GM12878 (cell line): ENCODE measurements at regions of chr19 and their contacts with region 1.

Region 1: GRCh38 chr19:40640744-40641143 is 39.6 kb downstream of the LTBP4 start:
- DNase-seq: no peak
- ATAC-seq: no peak
- H3K4me3 ChIP-seq: no peak overlapping the region
- H3K27ac ChIP-seq: no peak overlapping the region
- H3K4me1 ChIP-seq: peaks cover 5% of the 10 kb centered on the region; the same call in 1 of the 2 replicates
- H3K27me3 ChIP-seq: no peaks in the 10 kb centered on the region
- CTCF ChIP-seq: no peak
- EP300 ChIP-seq: no peak
- POLR2A ChIP-seq: no peak
- RAD21 ChIP-seq: no peak

Region 2: GRCh38 chr19:40139533-40140287 is 501.0 kb before region 1 on chr19:
- CTCF ChIA-PET with region 1: interaction called, 15 read pairs
- POLR2A ChIA-PET with region 1: no interaction called
- RAD21 ChIA-PET with region 1: no interaction called
- SMC1A ChIA-PET with region 1: no interaction called
- in situ Hi-C with region 1: no loop called
- intact Hi-C with region 1: no loop called
- DNase-seq: no peak
- ATAC-seq: peak; percentile 44
- H3K4me3 ChIP-seq: no peak overlapping the region
- H3K27ac ChIP-seq: no peak overlapping the region
- H3K4me1 ChIP-seq: peaks cover 18% of the 10 kb centered on the region
- H3K27me3 ChIP-seq: no peaks in the 10 kb centered on the region
- CTCF ChIP-seq: peak; percentile 56 to 87 (median 74)
- EP300 ChIP-seq: no peak
- POLR2A ChIP-seq: no peak
- RAD21 ChIP-seq: peak; percentile 99

Region 3: DNA sequence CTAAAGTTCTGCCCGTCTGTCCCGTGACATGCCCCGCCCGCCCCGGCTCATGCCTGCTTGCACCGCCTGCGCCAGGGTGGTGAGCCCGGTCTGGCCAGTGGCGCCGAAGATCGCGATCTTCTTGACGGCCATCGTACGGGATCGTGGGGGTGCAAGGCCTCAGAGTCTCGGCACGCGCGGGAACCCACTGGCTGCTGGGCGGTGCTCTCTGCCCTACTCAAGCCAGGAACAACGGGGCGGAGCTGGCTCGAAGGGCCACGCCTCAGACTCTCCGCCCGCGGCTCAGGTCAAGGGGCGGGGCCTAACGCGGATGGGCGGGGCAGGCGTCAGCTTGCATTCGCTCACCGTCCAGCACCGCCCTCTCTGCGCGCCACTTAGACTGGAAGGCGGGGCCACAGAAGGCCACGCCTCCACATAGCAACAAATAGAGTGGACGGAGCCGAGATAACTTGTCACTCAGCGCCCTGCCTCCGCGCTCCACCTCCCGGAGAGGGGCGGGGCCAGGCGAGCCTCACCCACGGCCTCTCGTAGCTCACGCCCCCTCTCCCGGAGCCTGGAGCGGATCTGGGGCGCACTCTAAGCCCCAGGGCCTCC is 175.1 kb before region 1 on chr19 and contains the start of gene BLVRB:
- CTCF ChIA-PET with region 1: interaction called, 40 read pairs
- POLR2A ChIA-PET with region 1: no interaction called
- RAD21 ChIA-PET with region 1: interaction called, 12 read pairs
- SMC1A ChIA-PET with region 1: interaction called, 5 read pairs
- in situ Hi-C with region 1: no loop called
- intact Hi-C with region 1: no loop called
- DNase-seq: peak; percentile 96
- ATAC-seq: peak; percentile 89
- H3K4me3 ChIP-seq: peak within 1 kb of the TSS; percentile 66
- H3K27ac ChIP-seq: peak within 1 kb of the TSS; percentile 61
- H3K4me1 ChIP-seq: peaks cover 31% of the 10 kb centered on the region
- H3K27me3 ChIP-seq: peaks cover 0 to 2% of the 10 kb centered on the region in 2 experiments; a peak in 3 of 4 replicates
- CTCF ChIP-seq: no peak
- EP300 ChIP-seq: no peak
- POLR2A ChIP-seq: peak; percentile 87
- RAD21 ChIP-seq: no peak
- polyA plus RNA-seq, gene BLVRB: 6.3 to 16.3 TPM

Region 4: GRCh38 chr19:40542202-40542859 is 98.4 kb before region 1 on chr19:
- CTCF ChIA-PET with region 1: interaction called, 28 read pairs
- POLR2A ChIA-PET with region 1: no interaction called
- RAD21 ChIA-PET with region 1: no interaction called
- SMC1A ChIA-PET with region 1: interaction called, 3 read pairs
- in situ Hi-C with region 1: no loop called
- intact Hi-C with region 1: no loop called
- DNase-seq: no peak
- ATAC-seq: no peak
- H3K4me3 ChIP-seq: no peak overlapping the region
- H3K27ac ChIP-seq: no peak overlapping the region
- H3K4me1 ChIP-seq: no peaks in the 10 kb centered on the region
- H3K27me3 ChIP-seq: peaks cover 0 to 2% of the 10 kb centered on the region in 2 experiments; a peak in 1 of 4 replicates
- CTCF ChIP-seq: no peak
- EP300 ChIP-seq: no peak
- POLR2A ChIP-seq: no peak
- RAD21 ChIP-seq: no peak

Region 5: GRCh38 chr19:40570313-40571004 is 70.3 kb before region 1 on chr19:
- CTCF ChIA-PET with region 1: interaction called, 14 read pairs
- POLR2A ChIA-PET with region 1: no interaction called
- RAD21 ChIA-PET with region 1: no interaction called
- SMC1A ChIA-PET with region 1: no interaction called
- in situ Hi-C with region 1: no loop called
- intact Hi-C with region 1: no loop called
- DNase-seq: peak; percentile 97
- ATAC-seq: peak; percentile 99
- H3K4me3 ChIP-seq: no peak overlapping the region; the same call in 1 of the 2 replicates
- H3K27ac ChIP-seq: no peak overlapping the region
- H3K4me1 ChIP-seq: peaks cover 4% of the 10 kb centered on the region
- H3K27me3 ChIP-seq: peaks cover 4 to 11% of the 10 kb centered on the region in 2 experiments; a peak in 3 of 4 replicates
- CTCF ChIP-seq: peak; percentile 43 to 52 (median 47); a peak in 5 of 6 replicates
- EP300 ChIP-seq: no peak
- POLR2A ChIP-seq: peak; percentile 47; the same call in 1 of the 2 replicates
- RAD21 ChIP-seq: peak; percentile 35; the same call in 1 of the 2 replicates

Region 6: DNA sequence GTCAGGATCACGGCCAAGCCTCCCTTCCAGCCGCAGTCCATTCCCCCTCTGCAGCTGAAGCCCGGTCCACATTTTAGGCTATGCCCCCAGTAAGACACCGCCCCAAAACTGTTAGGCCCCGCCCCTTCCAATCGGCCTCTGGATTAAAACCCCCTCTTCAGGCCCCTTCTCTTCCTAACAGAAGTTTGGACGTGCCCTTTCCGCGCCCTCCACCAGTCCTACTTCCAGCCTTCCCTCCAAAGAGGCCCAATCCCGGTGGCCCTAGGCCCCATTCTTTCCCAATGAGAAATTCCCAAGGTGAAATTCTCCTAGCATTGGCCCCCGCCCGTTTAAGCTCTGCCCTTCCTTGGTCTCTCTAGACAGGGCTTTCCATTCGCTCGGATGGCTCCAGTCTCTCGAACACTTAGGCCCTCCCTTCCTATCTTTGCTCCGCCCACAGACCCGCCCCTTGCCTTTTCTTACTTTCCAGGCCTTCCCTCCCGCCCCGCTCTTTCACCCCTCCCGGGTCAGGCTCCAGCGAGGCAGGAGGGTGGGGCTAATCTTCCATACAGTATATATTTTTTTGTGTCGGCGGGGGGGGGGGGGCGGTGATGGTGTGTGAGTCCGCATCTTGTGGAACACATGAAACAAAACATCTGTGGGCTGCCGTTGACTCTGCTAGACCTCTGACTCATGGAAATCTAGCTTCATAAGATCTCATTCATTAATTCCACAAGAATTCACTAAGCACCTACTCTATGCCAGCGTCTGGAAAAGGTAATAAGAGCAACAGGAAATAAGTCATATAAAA is 25.9 kb before region 1 on chr19:
- CTCF ChIA-PET with region 1: interaction called, 30 read pairs
- POLR2A ChIA-PET with region 1: interaction called, 3 read pairs
- RAD21 ChIA-PET with region 1: no interaction called
- SMC1A ChIA-PET with region 1: interaction called, 5 read pairs
- in situ Hi-C with region 1: no loop called
- intact Hi-C with region 1: no loop called
- DNase-seq: peak; percentile 35
- ATAC-seq: peak; percentile 49
- H3K4me3 ChIP-seq: peak overlapping the region; percentile 98
- H3K27ac ChIP-seq: peak overlapping the region; percentile 38; the same call in 1 of the 2 replicates
- H3K4me1 ChIP-seq: peaks cover 10% of the 10 kb centered on the region; the same call in 1 of the 2 replicates
- H3K27me3 ChIP-seq: no peaks in the 10 kb centered on the region; a peak in 1 of 4 replicates
- CTCF ChIP-seq: no peak
- EP300 ChIP-seq: no peak
- POLR2A ChIP-seq: no peak
- RAD21 ChIP-seq: no peak

Region 7: DNA sequence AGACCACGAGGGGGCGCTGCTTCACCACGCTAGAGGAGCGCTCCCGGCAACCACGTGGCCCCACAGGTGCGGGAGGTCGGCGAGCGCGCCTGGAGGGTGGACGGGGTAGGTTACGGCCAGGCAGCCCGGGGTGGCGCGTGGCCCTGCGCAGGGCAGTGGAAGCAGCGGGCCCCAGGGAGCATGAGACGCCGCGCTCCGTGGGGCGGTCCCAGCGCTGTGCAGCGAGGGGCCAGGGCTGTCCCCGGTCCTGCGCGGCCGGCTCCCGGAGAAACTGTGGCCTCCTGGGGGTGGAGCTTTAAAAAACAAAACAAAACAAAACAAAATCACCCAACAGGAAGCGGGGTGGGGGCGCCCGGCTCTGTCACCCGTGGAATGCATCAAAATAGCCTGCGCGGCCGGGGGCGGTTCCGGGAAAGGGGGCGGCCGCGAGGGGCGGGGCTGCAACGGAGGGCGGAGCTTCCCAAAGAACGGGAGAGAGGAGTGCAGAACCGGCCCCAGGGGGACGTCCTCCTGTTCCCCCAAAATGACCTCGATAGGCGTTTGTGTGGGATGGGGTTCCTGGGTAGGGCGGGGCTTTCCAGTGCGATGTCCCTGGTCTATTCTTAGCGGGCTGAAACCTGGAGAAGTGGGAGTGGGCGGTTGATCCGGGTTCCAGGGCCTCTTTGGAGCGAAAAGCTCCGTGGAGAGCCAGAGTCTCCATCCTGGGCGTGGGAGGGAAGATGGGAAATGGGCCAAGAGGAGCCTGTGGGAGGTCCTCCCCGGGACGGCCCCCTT is 22.4 kb after region 1 on chr19:
- CTCF ChIA-PET with region 1: interaction called, 10 read pairs
- POLR2A ChIA-PET with region 1: no interaction called
- RAD21 ChIA-PET with region 1: no interaction called
- SMC1A ChIA-PET with region 1: no interaction called
- in situ Hi-C with region 1: no loop called
- intact Hi-C with region 1: no loop called
- DNase-seq: peak; percentile 24
- ATAC-seq: peak; percentile 97
- H3K4me3 ChIP-seq: peak overlapping the region; percentile 83
- H3K27ac ChIP-seq: no peak overlapping the region
- H3K4me1 ChIP-seq: peaks cover 6% of the 10 kb centered on the region
- H3K27me3 ChIP-seq: no peaks in the 10 kb centered on the region
- CTCF ChIP-seq: peak in 2 of 3 experiments; percentile 94 to 95; a peak in 5 of 6 replicates
- EP300 ChIP-seq: no peak
- POLR2A ChIP-seq: peak; percentile 68
- RAD21 ChIP-seq: peak; percentile 90

Region 8: GRCh38 chr19:41172297-41173164 is 531.8 kb after region 1 on chr19:
- CTCF ChIA-PET with region 1: no interaction called
- POLR2A ChIA-PET with region 1: no interaction called
- RAD21 ChIA-PET with region 1: no interaction called
- SMC1A ChIA-PET with region 1: no interaction called
- in situ Hi-C with region 1: no loop called
- intact Hi-C with region 1: no loop called
- DNase-seq: no peak
- ATAC-seq: no peak
- H3K4me3 ChIP-seq: no peak overlapping the region
- H3K27ac ChIP-seq: no peak overlapping the region
- H3K4me1 ChIP-seq: no peaks in the 10 kb centered on the region
- H3K27me3 ChIP-seq: no peaks in the 10 kb centered on the region
- CTCF ChIP-seq: no peak
- EP300 ChIP-seq: no peak
- POLR2A ChIP-seq: no peak
- RAD21 ChIP-seq: no peak